Right cardiac atrium (tissue), 5 donors: ENCODE measurements at regions of chr19 and their contacts with region 1.

Region 1: GRCh38 chr19:29610563-29611271 is 4.6 kb downstream of the POP4 start:
- DNase-seq: peak; percentile 78 to 94 (median 89)
- ATAC-seq: peak; percentile 78 to 84
- H3K4me3 ChIP-seq: no peak overlapping the region
- H3K27ac ChIP-seq: no peak overlapping the region
- H3K4me1 ChIP-seq: no peaks in the 10 kb centered on the region
- H3K27me3 ChIP-seq: no peaks in the 10 kb centered on the region

Region 2: DNA sequence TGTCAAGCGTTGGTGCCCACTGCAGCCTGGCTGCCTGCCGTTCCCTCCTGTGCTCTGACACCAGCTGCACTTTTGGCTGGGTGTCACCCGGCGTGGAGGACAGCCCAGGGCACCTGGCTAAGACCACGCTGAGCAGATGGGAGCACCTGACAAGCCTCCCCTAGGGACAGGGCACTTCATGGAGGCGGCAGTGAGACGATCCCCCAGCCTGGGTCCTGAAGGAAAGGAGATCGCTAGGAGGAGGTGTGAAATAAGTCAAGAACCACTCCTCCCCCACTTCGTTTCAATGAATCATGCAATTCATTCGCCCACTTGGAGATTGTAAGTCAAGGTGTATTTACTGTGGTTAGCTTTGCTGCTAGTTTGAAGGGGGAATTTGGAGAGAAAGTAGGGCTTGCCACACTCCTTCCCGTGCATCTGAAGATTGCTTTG is 46.1 kb before region 1 on chr19:
- intact Hi-C with region 1: no loop called
- DNase-seq: no peak
- ATAC-seq: no peak
- H3K4me3 ChIP-seq: no peak overlapping the region
- H3K27ac ChIP-seq: no peak overlapping the region
- H3K4me1 ChIP-seq: no peaks in the 10 kb centered on the region
- H3K27me3 ChIP-seq: no peaks in the 10 kb centered on the region

Region 3: GRCh38 chr19:29665215-29665825 is 54.6 kb after region 1 on chr19 and contains the start of gene PLEKHF1:
- intact Hi-C with region 1: loop called in 2 of 4 experiments (anchors 5 to 10 kb)
- DNase-seq: peak; percentile 92 to 98 (median 97)
- ATAC-seq: peak; percentile 88
- H3K4me3 ChIP-seq: peak within 1 kb of the TSS; percentile 77
- H3K27ac ChIP-seq: peak within 1 kb of the TSS; percentile 94
- H3K4me1 ChIP-seq: peaks cover 12% of the 10 kb centered on the region
- H3K27me3 ChIP-seq: no peaks in the 10 kb centered on the region
- total RNA-seq, gene PLEKHF1: 25.1 to 44.1 (median 31.0) TPM

Region 4: DNA sequence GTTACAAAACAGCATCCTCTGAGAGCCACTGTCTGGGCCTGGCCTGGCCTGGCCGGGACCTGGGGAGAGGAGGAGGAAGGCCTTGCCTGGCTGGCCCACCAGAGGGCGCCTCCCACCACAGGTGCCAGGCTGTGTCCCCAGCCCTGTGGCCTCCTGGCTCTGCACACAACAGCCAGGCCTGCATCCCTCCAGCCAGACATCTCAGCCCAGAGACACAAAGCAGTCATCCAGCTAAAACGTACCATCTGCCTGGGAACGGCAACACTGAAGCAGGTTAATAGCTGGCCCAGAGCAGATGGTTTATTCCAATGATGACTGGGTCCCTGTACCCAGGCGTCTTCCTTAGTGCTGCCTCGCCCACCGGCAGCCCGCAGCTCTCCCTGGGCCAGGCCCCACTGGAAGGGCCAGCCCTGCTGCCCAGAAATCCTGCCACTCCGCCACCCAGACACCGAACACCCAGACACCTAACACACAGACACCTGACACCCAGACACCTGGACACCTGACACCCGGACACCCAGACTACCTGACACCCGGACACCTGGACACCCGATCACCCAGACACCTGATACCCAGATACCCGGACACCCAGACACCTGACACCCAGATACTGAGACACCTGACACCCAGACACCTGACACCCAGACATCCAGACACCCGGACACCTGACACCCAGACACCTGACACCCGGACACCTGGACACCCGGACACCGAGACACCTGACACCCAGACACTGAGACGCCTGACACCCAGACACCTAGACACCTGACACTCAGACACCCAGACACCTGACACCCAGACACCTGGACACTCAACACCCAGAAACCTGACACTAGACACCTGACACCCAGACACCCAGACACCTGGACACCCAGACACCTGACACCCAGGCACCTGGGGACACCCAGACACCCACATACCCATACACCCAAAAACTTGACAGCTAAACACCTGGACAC is 84.2 kb after region 1 on chr19:
- intact Hi-C with region 1: loop called in 3 of 4 experiments (anchors 5 to 10 kb)
- DNase-seq: peak; percentile 87 to 94 (median 93)
- ATAC-seq: peak; percentile 93 to 97
- H3K4me3 ChIP-seq: no peak overlapping the region
- H3K27ac ChIP-seq: no peak overlapping the region
- H3K4me1 ChIP-seq: peaks cover 2% of the 10 kb centered on the region
- H3K27me3 ChIP-seq: no peaks in the 10 kb centered on the region

Region 5: DNA sequence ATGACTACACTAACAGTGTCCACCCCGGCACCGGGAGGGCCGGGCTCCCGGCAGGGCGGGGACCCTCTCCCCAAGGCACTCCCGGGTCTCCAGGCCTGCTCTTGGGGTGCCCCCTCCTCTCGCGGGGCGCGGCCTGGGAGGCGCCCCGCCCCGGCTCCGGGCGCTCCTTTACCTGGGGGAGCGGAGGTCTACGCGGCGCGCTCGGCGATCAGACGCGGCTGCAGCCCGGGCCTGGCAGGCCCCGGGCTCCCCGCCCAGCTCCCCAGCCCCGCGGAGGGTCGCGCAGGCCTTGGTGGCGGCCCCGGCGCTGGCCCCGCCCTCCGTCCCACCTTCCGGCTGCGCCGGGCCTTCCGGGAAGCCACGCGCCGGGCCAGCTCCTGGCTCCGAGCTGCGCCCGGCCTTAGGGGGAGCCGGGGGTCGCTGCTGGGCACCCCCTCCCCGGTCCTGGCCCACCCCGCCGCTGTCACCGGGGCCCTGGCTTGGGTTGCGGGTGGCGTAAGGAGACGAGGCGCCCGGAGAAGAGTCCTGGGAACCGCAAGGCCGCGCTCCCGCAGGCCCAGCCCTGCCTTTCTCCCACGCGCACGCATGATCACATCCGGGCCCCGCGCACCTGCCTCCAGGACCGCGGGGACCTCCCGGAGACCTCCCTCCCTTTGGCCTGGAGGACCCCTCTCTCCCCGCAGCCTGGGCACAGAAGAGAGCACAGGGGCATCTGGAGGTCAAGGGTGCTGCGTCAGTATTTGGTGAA is 104.4 kb after region 1 on chr19 and contains the start of gene C19orf12:
- intact Hi-C with region 1: loop called (anchors 1 to 5 kb)
- DNase-seq: peak; percentile 63 to 88 (median 88)
- ATAC-seq: peak; percentile 86 to 89
- H3K4me3 ChIP-seq: peak within 1 kb of the TSS; percentile 98
- H3K27ac ChIP-seq: peak within 1 kb of the TSS; percentile 85
- H3K4me1 ChIP-seq: peaks cover 3% of the 10 kb centered on the region
- H3K27me3 ChIP-seq: no peaks in the 10 kb centered on the region
- total RNA-seq, gene C19orf12: 40.6 to 48.2 (median 43.5) TPM

Region 6: GRCh38 chr19:29724102-29724641 is 113.5 kb after region 1 on chr19:
- intact Hi-C with region 1: loop called in 2 of 4 experiments (anchors 5 kb)
- DNase-seq: no peak
- ATAC-seq: peak; percentile 46 to 49
- H3K4me3 ChIP-seq: peak overlapping the region; percentile 42
- H3K27ac ChIP-seq: no peak overlapping the region
- H3K4me1 ChIP-seq: no peaks in the 10 kb centered on the region
- H3K27me3 ChIP-seq: no peaks in the 10 kb centered on the region